A549 (cell line): ENCODE measurements at regions of chr22 and their contacts with region 1.

Region 1: DNA sequence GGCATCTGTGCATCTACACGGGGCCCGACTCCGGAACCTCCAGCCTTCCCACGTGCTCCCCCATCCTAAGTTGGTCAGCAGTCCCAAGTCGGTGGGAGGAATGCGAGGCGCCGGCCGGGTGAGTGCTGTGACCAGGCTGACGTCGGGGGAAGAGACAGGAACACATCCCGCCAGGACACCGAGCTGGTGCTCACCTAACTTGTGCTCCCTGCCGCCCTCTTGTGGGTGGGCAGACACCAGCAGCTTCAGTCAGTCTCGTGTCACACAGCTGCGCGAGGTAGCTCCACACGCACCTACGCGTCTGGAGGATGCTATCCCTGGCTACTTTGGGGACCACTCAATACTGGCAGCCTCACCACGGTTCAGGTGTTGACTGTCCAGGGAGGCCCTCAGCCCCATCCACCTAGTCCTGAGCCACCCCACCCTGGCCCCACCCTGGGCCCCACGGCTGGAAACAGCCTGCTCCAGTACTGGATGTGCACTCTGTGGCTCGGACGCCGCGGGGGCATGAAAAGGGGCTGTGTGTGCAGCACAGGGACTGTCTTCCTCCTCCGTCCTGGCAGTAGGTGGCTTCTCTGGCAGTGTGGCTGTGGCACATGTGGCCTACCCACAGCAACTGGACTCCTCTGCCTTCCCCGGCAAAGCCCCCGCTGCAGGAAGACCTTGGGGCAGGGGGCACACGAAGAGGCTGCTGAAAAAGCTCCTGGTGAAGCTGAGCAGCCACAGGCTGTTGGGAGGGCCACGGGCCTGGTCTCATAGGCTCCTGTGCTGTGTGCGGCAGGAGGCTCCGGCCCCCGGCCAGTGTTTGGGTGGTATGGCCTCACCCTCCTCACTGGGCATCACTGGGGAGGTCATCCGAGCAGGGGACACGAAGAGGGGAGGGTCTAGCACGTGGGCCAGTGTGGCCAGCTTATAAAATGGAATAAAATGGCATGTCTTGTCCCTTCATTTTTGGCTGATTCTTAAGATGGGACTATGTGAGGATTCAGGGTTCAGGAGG is 11.2 kb upstream of the BID start:
- DNase-seq: peak; percentile 31 to 67
- ATAC-seq: peak; percentile 45 to 73; a peak in 4 of 6 replicates
- H3K4me3 ChIP-seq: no peak overlapping the region
- H3K27ac ChIP-seq: peak overlapping the region; percentile 45; a peak in 2 of 6 replicates
- H3K4me1 ChIP-seq: peaks cover 25% of the 10 kb centered on the region
- CTCF ChIP-seq: peak; percentile 46
- EP300 ChIP-seq: no peak
- POLR2A ChIP-seq: no peak
- RAD21 ChIP-seq: peak; percentile 38 to 46; a peak in 3 of 5 replicates

Region 2: DNA sequence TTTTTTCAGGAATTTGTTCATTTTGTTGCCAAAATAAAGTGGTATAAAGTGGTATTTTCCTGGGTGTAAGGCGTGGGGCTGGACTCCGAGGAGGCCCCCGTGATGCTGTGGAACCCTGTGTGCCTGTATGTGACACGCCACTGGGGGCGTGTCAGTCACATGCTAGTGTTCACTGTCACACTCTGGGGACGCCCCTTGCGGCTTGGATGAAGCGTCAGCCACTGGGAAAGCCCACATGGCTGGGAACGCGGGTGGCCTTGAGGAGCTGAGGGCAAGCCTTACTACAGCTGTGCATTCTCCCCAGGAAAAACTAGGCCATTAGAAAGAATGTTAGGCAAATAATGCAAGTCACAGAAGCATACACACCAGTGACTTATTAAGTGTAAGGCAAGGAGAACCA is 299.2 kb before region 1 on chr22:
- CTCF ChIA-PET with region 1: no interaction called
- POLR2A ChIA-PET with region 1: no interaction called
- DNase-seq: peak in 1 of 2 experiments; percentile 7
- ATAC-seq: peak; percentile 30 to 37; a peak in 2 of 6 replicates
- H3K4me3 ChIP-seq: no peak overlapping the region
- H3K27ac ChIP-seq: no peak overlapping the region
- H3K4me1 ChIP-seq: no peaks in the 10 kb centered on the region
- CTCF ChIP-seq: no peak
- EP300 ChIP-seq: no peak
- POLR2A ChIP-seq: no peak
- RAD21 ChIP-seq: no peak

Region 3: DNA sequence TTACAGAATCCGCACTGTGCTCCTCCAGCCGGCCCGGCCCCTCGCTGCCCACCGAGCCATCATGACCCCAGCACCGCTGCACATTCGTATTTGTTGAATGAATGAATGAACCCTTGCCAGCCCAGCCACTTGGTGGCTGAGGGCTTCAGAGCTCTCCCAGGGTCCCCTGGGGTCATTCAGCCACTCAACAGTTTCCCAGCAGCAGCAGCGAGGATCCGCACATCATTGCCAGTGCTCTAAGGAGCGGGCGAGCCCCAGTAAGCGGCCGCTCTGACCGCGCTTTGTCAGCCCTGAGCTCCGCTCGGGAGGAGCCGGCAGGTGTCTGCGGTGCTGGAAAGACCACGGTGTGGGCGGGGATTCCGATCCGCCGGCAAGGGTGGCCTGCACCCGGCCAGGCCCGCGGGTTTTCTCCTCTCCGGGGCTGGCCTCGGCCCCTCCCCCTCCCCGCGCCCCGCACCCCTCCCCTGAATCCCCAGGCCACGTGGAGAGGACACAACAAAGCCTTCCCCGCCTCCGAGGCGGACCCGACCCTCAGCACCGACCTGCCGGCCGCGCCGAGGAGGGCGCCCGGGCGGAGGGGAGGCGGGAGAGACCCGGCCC is 11.8 kb before region 1 on chr22:
- CTCF ChIA-PET with region 1: interaction called, 14 read pairs
- POLR2A ChIA-PET with region 1: no interaction called
- DNase-seq: peak; percentile 12 to 33
- ATAC-seq: peak; percentile 54 to 75
- H3K4me3 ChIP-seq: peak overlapping the region; percentile 98
- H3K27ac ChIP-seq: peak overlapping the region; percentile 95 to 98
- H3K4me1 ChIP-seq: peaks cover 17% of the 10 kb centered on the region
- CTCF ChIP-seq: no peak
- EP300 ChIP-seq: no peak
- POLR2A ChIP-seq: no peak
- RAD21 ChIP-seq: no peak

Region 4: DNA sequence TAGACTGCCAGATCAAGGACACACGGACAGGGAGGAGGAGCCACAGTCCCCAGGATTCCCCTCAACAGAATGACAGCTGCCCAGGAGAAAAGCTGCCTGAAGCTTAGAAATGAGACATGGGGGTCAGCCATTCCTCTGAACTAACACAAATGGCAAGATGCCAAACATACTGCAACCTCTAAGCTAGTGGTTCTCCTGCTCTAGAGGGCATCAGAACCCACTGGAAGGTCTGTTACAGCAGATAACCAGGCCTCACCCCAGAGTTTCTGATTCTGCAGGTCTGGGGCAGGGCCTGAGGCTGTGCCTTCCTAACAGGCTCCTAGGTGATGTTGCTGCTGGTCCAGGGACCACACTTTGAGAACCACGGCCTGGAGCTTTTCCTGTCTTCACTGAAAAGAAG is 17.3 kb after region 1 on chr22:
- CTCF ChIA-PET with region 1: interaction called, 16 read pairs
- POLR2A ChIA-PET with region 1: no interaction called
- DNase-seq: no peak
- ATAC-seq: no peak
- H3K4me3 ChIP-seq: no peak overlapping the region
- H3K27ac ChIP-seq: no peak overlapping the region
- H3K4me1 ChIP-seq: no peaks in the 10 kb centered on the region
- CTCF ChIP-seq: no peak
- EP300 ChIP-seq: no peak
- POLR2A ChIP-seq: no peak
- RAD21 ChIP-seq: no peak